ENCODE measurements at regions of chr12 and their contacts with region 1.

Region 1: DNA sequence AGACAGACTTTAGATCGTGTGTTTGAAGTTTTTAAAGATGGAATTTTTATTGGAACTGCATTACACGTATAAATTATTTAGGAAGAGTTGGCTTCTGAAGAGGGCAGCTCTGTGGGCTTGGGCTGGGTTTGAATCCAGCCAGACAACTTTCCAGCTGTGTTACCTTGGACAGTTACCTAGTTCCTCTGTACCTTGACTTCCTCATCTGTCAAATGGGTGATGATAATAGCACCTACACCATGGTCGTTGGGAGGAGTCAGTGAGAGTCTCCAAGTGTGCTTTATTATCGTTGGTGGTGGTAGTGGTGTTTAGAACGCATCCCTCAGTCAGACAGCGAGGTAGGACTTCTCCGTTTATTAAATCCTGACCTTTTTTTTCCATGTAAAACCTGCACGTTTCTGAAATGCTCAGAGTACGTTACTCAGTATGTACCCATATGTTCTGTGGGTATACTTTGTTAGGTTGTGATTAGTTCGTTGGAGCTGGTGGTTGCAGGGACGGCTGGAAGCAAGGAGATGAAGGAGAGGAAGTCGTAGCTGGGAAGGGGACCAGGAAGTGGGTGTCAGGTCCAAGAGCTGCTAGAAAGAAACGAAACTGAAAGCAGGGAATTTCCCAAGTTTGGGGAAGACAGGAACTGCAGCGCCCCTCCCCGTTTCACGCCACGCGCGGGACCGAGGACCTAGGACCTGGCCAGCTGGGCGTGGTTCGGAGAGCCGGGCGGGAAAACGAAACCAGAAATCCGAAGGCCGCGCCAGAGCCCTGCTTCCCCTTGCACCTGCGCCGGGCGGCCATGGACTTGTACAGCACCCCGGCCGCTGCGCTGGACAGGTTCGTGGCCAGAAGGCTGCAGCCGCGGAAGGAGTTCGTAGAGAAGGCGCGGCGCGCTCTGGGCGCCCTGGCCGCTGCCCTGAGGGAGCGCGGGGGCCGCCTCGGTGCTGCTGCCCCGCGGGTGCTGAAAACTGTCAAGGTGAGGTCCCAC is at the start of gene OAS3:
- DNase-seq: peak; percentile 77
- ATAC-seq: peak; percentile 90
- H3K4me3 ChIP-seq: peak within 1 kb of the TSS; percentile 76 to 86 (median 81)
- H3K27ac ChIP-seq: peak within 1 kb of the TSS; percentile 49
- H3K4me1 ChIP-seq: peaks cover 28% of the 10 kb centered on the region
- H3K27me3 ChIP-seq: no peaks in the 10 kb centered on the region; a peak in 1 of 5 replicates
- CTCF ChIP-seq: peak; percentile 52
- EP300 ChIP-seq: no peak
- POLR2A ChIP-seq: peak in 1 of 2 experiments; percentile 54
- RAD21 ChIP-seq: peak; percentile 11; the same call in 1 of the 2 replicates
- total RNA-seq, gene OAS3: 10.5 and 16.7 TPM in 2 replicates

Region 2: GRCh38 chr12:112906712-112907414 is 31.2 kb before region 1 on chr12 and contains the start of gene OAS1:
- CTCF ChIA-PET with region 1: no interaction called
- POLR2A ChIA-PET with region 1: interaction called, 13 read pairs
- in situ Hi-C with region 1: no loop called
- intact Hi-C with region 1: no loop called
- DNase-seq: peak; percentile 72
- ATAC-seq: peak; percentile 98
- H3K4me3 ChIP-seq: peak within 1 kb of the TSS; percentile 54 to 68 (median 68)
- H3K27ac ChIP-seq: peak within 1 kb of the TSS; percentile 45
- H3K4me1 ChIP-seq: peaks cover 32% of the 10 kb centered on the region
- H3K27me3 ChIP-seq: no peaks in the 10 kb centered on the region
- CTCF ChIP-seq: no peak
- EP300 ChIP-seq: no peak
- POLR2A ChIP-seq: peak; percentile 32 to 34; a peak in 1 of 4 replicates
- RAD21 ChIP-seq: no peak
- total RNA-seq, gene OAS1: 6.5 and 7.5 TPM in 2 replicates